Heart right ventricle (tissue), 16 donors: ENCODE measurements at regions of chr1 and their contacts with region 1.

Region 1: GRCh38 chr1:198157241-198157846 is 546 bp downstream of the NEK7 start:
- DNase-seq: peak; percentile 84 to 91
- ATAC-seq: peak; percentile 69 to 84 (median 75)
- H3K4me3 ChIP-seq: peak overlapping the region; percentile 81 to 97 (median 92)
- H3K27ac ChIP-seq: peak overlapping the region; percentile 94 to 100 (median 98)
- H3K4me1 ChIP-seq: peaks cover 0 to 79% (median 62%) of the 10 kb centered on the region in 9 donors
- H3K27me3 ChIP-seq: no peaks in the 10 kb centered on the region
- CTCF ChIP-seq: no peak

Region 2: GRCh38 chr1:198096390-198096789 is 61.0 kb before region 1 on chr1:
- intact Hi-C with region 1: loop called in 2 of 10 experiments (anchors 5 kb)
- DNase-seq: no peak
- ATAC-seq: no peak
- H3K4me3 ChIP-seq: no peak overlapping the region
- H3K27ac ChIP-seq: no peak overlapping the region
- H3K4me1 ChIP-seq: no peaks in the 10 kb centered on the region
- H3K27me3 ChIP-seq: no peaks in the 10 kb centered on the region
- CTCF ChIP-seq: no peak

Region 3: GRCh38 chr1:198228913-198229312 is 71.6 kb after region 1 on chr1:
- intact Hi-C with region 1: no loop called
- DNase-seq: no peak
- ATAC-seq: peak in 2 of 8 donors; percentile 13 to 44
- H3K4me3 ChIP-seq: no peak overlapping the region
- H3K27ac ChIP-seq: peak overlapping the region in 4 of 10 donors; percentile 4 to 28 (median 14)
- H3K4me1 ChIP-seq: peaks cover 0 to 39% (median 22%) of the 10 kb centered on the region in 9 donors
- H3K27me3 ChIP-seq: no peaks in the 10 kb centered on the region
- CTCF ChIP-seq: no peak

Region 4: GRCh38 chr1:198246337-198246736 is 89.0 kb after region 1 on chr1:
- intact Hi-C with region 1: no loop called
- DNase-seq: no peak
- ATAC-seq: peak in 1 of 8 donors; percentile 24
- H3K4me3 ChIP-seq: no peak overlapping the region
- H3K27ac ChIP-seq: no peak overlapping the region
- H3K4me1 ChIP-seq: peaks cover 0 to 45% (median 22%) of the 10 kb centered on the region in 9 donors
- H3K27me3 ChIP-seq: no peaks in the 10 kb centered on the region
- CTCF ChIP-seq: no peak

Region 5: GRCh38 chr1:198259336-198260074 is 102.2 kb after region 1 on chr1:
- intact Hi-C with region 1: loop called in 3 of 10 experiments (anchors 5 to 10 kb)
- DNase-seq: no peak
- ATAC-seq: no peak
- H3K4me3 ChIP-seq: no peak overlapping the region
- H3K27ac ChIP-seq: peak overlapping the region in 4 of 10 donors; percentile 2 to 42 (median 25)
- H3K4me1 ChIP-seq: peaks cover 1 to 61% (median 46%) of the 10 kb centered on the region in 9 donors
- H3K27me3 ChIP-seq: no peaks in the 10 kb centered on the region
- CTCF ChIP-seq: no peak

Region 6: GRCh38 chr1:198275597-198275996 is 118.3 kb after region 1 on chr1:
- intact Hi-C with region 1: loop called in 2 of 10 experiments (anchors 10 kb)
- DNase-seq: no peak
- ATAC-seq: no peak
- H3K4me3 ChIP-seq: no peak overlapping the region
- H3K27ac ChIP-seq: no peak overlapping the region
- H3K4me1 ChIP-seq: peaks cover 0 to 60% (median 28%) of the 10 kb centered on the region in 9 donors
- H3K27me3 ChIP-seq: no peaks in the 10 kb centered on the region
- CTCF ChIP-seq: peak in 2 of 9 donors; percentile 14 to 23

Region 7: GRCh38 chr1:198298640-198299039 is 141.3 kb after region 1 on chr1:
- intact Hi-C with region 1: loop called in 1 of 10 experiments (anchors 10 kb)
- DNase-seq: no peak
- ATAC-seq: no peak
- H3K4me3 ChIP-seq: no peak overlapping the region
- H3K27ac ChIP-seq: no peak overlapping the region
- H3K4me1 ChIP-seq: peaks cover 0 to 15% (median 0%) of the 10 kb centered on the region in 9 donors
- H3K27me3 ChIP-seq: no peaks in the 10 kb centered on the region
- CTCF ChIP-seq: no peak

Region 8: DNA sequence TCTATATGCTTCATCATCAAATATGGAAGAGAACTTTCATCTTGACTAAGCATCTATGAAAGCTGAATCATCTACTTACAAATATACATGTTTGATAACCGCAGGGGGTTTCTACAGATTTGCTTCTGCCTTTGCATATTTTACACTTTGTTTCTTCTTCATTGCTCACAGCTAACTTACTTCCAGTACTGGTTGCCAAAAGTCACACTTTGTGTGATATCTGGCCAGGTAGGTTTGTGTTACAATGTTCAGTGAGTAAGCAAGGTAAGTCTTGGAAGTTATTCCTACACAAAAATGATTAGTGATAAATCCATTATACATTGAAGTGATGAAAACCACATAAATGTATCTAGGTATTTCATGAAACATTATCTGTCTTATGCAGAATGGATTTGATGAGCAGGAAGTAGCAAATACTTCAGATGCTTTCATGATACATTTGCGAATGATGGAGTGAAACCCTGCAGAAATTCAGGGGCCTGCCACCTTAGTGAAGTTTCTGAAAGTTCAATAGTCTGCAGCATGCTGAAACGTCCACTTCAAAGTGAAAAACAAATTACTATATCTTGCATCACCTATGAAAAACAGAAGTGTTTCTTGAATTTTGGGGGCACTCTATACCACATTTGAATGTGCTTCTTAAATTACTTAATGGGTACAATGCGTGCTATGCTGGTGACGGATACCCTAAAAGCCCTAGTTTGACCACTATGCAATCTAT is 195.8 kb after region 1 on chr1:
- intact Hi-C with region 1: no loop called
- DNase-seq: no peak
- ATAC-seq: no peak
- H3K4me3 ChIP-seq: no peak overlapping the region
- H3K27ac ChIP-seq: no peak overlapping the region
- H3K4me1 ChIP-seq: no peaks in the 10 kb centered on the region
- H3K27me3 ChIP-seq: peaks cover 0 to 8% (median 0%) of the 10 kb centered on the region in 7 donors
- CTCF ChIP-seq: no peak